Mucosa of descending colon (tissue), 3 donors: ENCODE measurements at regions of chr1 and their contacts with region 1.

Region 1: DNA sequence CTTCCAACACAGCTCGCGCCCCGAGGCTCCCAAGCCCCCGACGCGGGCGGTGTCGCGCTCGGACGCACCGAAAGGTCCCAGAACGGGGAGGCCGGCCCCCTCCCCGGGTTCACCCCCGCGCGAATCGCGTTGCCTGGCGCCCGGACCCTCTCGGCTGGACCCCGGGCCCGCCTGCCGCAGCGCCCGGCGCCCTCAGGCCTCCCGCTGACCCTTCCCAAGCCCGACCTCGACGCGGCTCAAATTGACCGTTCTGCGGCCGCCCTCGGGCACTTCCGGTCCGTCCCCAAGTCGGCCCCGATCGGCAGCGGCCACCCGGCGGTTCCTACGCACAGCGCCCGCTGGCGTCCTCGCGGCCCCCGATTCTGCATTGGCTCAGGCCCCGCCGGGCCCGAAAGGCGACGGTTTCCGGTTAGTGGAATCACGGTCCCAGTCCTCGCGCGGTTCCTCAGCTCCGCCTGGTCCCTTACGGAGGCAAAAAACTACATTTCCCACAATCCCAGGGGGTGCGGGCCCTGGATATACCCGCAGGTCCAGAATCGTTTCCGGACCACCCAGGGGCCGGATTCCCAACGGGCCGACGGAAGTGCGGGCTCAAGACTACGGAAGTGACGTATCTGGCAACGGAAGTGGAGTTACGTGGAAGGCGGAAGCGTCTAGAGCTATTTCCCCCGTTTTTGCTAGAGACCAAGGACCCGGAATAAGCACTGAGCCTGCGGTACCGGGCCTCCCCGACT is at the start of gene AURKAIP1:
- DNase-seq: peak; percentile 97 to 99 (median 98)
- ATAC-seq: peak; percentile 93
- H3K4me3 ChIP-seq: peak within 1 kb of the TSS; percentile 98
- H3K4me1 ChIP-seq: peaks cover 26% of the 10 kb centered on the region
- CTCF ChIP-seq: peak; percentile 43
- total RNA-seq, gene AURKAIP1: 150 to 180 (median 177) TPM

Region 2: DNA sequence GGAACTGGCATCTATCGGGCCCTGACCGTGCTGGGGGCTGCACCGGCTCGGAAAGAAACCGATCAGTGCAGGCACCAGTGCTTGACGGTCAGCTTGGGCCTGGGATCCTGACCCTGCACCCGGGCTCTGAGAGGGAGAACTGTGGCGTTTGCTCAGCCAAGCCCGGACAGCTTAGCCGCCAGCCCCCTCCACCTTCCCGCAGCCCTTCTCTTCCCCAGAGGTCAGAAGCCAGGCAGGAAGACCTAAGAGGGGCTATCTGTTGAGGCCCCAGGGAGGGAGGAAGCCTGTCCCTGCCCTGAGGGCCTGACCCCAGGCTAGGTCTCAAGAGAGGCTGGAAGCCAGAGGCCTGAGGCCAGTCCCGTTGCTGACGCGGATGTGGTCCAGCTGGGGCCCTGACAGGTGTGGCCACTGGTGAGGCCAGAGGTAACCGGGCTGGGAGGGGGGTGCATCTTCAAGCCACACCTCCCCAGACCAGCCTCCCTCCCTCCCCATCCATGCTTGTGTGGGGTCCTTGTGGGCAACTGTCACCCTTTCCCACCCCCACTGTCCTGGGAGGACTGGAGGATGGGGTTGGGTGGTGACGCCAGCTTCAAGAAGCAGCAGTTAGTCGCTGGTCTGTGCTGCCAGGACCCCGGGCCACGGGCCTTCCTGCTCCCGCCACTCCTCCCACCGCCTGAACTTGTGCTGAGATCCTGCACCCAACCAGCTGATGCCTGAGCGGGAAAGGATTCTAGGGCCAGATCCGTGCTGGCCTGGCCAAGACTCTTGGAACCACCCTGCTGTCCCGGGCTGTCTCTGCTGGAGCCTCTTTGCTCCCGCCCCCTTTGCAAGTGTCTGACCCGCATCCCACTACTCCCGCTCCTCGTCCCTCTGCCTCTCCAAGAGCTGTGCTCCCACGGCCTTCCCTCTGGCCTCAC is 23.3 kb before region 1 on chr1:
- intact Hi-C with region 1: loop called in 1 of 2 experiments (anchors 2 kb)
- DNase-seq: no peak
- ATAC-seq: no peak
- H3K4me3 ChIP-seq: no peak overlapping the region
- H3K4me1 ChIP-seq: peaks cover 27% of the 10 kb centered on the region
- CTCF ChIP-seq: no peak